AG04449 (cell line): ENCODE measurements at regions of chr1 and their contacts with region 1.

Region 1: GRCh38 chr1:26961826-26962225 is 1.6 kb upstream of the KDF1 start:
- DNase-seq: peak; percentile 81
- H3K4me3 ChIP-seq: no peak overlapping the region
- CTCF ChIP-seq: no peak

Region 2: DNA sequence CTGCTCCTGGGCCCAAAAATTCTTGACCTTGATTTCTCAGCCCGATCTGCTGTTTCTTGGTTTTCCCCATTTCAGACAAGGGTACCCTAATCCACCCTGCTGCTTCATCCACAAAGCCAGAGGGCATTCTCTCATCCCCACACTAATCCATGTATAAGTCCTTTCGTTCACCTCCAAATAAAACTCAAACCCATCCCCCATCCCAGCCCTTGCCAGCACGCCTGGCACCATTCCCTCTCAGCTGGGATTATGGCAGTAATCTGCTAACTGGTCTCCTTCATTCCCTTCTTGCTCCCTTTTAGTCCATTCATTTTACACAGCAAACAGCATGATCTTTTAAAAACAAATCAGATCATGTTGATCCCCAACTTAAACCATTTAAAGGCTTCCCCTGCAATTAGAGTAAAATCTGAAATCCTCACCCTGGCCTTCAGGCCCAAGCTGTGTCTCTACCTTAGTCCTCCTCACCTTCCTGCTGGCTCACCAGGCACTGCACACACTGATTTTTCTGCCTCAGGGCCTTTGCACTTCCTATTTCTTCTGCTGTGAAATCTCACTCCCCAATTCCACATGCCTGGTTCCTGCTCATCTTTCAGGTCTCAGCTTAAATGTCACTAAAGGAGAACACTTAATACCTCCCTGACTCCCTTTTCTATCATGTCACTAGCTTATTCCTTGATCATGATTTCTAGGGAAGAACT is 19.5 kb after region 1 on chr1:
- CTCF ChIA-PET with region 1: interaction called, 18 read pairs
- POLR2A ChIA-PET with region 1: no interaction called
- DNase-seq: no peak
- H3K4me3 ChIP-seq: no peak overlapping the region
- CTCF ChIP-seq: no peak